GM12878 (cell line): ENCODE measurements at regions of chr7 and their contacts with region 1.

Region 1: GRCh38 chr7:55641273-55641691 is 69.0 kb upstream of the VOPP1 start:
- DNase-seq: peak; percentile 65
- ATAC-seq: peak; percentile 95
- H3K4me3 ChIP-seq: no peak overlapping the region
- H3K27ac ChIP-seq: no peak overlapping the region
- H3K4me1 ChIP-seq: peaks cover 3% of the 10 kb centered on the region
- H3K27me3 ChIP-seq: no peaks in the 10 kb centered on the region
- CTCF ChIP-seq: peak; percentile 74 to 89 (median 76)
- EP300 ChIP-seq: no peak
- POLR2A ChIP-seq: no peak
- RAD21 ChIP-seq: peak; percentile 99

Region 2: GRCh38 chr7:55657654-55658053 is 16.4 kb after region 1 on chr7:
- CTCF ChIA-PET with region 1: interaction called, 19 read pairs
- POLR2A ChIA-PET with region 1: no interaction called
- RAD21 ChIA-PET with region 1: interaction called, 3 read pairs
- SMC1A ChIA-PET with region 1: interaction called, 9 read pairs
- in situ Hi-C with region 1: no loop called
- intact Hi-C with region 1: no loop called
- DNase-seq: peak; percentile 11
- ATAC-seq: peak; percentile 63
- H3K4me3 ChIP-seq: no peak overlapping the region
- H3K27ac ChIP-seq: no peak overlapping the region
- H3K4me1 ChIP-seq: no peaks in the 10 kb centered on the region
- H3K27me3 ChIP-seq: no peaks in the 10 kb centered on the region
- CTCF ChIP-seq: no peak
- EP300 ChIP-seq: no peak
- POLR2A ChIP-seq: no peak
- RAD21 ChIP-seq: no peak

Region 3: GRCh38 chr7:55723621-55723941 is 82.3 kb after region 1 on chr7:
- CTCF ChIA-PET with region 1: interaction called, 3 read pairs
- POLR2A ChIA-PET with region 1: no interaction called
- RAD21 ChIA-PET with region 1: no interaction called
- SMC1A ChIA-PET with region 1: interaction called, 3 read pairs
- in situ Hi-C with region 1: no loop called
- intact Hi-C with region 1: loop called (anchors 5 kb)
- DNase-seq: no peak
- ATAC-seq: no peak
- H3K4me3 ChIP-seq: no peak overlapping the region
- H3K27ac ChIP-seq: no peak overlapping the region
- H3K4me1 ChIP-seq: no peaks in the 10 kb centered on the region
- H3K27me3 ChIP-seq: no peaks in the 10 kb centered on the region
- CTCF ChIP-seq: no peak
- EP300 ChIP-seq: no peak
- POLR2A ChIP-seq: no peak
- RAD21 ChIP-seq: no peak